ENCODE measurements at regions of chr17 and their contacts with region 1.

Region 1: GRCh38 chr17:67993596-67994361 is 2.5 kb downstream of the C17orf58 start:
- DNase-seq: peak; percentile 97
- H3K4me3 ChIP-seq: peak overlapping the region; percentile 95
- H3K27ac ChIP-seq: peak overlapping the region; percentile 88
- H3K4me1 ChIP-seq: peaks cover 27% of the 10 kb centered on the region
- CTCF ChIP-seq: no peak

Region 2: GRCh38 chr17:67800495-67800928 is 193.3 kb before region 1 on chr17:
- CTCF ChIA-PET with region 1: no interaction called
- POLR2A ChIA-PET with region 1: no interaction called
- intact Hi-C with region 1: no loop called
- DNase-seq: peak; percentile 87
- H3K4me3 ChIP-seq: no peak overlapping the region
- H3K27ac ChIP-seq: no peak overlapping the region
- H3K4me1 ChIP-seq: peaks cover 23% of the 10 kb centered on the region
- CTCF ChIP-seq: peak; percentile 89

Region 3: DNA sequence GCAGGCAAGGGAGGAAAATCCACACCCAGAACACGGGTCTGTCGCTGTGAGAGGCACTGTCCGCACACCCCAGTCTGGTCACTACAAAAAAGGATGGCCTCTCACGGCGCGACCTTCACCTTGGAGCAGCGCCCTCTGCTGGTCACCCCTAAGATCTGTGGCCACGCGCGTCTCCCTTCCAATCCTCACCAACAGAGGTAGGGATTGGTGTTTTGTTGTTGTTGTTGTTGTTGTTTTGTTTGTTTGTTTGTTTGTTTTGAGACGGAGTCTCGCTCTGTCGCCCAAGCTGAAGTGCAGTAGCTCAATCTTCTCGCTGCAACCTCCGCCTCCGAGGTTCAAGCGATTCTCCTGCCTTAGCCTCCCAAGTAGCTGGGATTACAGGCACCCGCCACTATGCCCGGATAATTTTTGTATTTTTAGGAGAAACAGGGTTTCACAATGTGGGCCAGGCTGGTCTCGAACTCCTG is 17.5 kb after region 1 on chr17:
- CTCF ChIA-PET with region 1: interaction called, 3 read pairs
- POLR2A ChIA-PET with region 1: interaction called, 5 read pairs
- intact Hi-C with region 1: loop called (anchors 2 kb)
- DNase-seq: peak; percentile 77
- H3K4me3 ChIP-seq: peak overlapping the region; percentile 47
- H3K27ac ChIP-seq: no peak overlapping the region
- H3K4me1 ChIP-seq: peaks cover 3% of the 10 kb centered on the region
- CTCF ChIP-seq: peak; percentile 94

Region 4: DNA sequence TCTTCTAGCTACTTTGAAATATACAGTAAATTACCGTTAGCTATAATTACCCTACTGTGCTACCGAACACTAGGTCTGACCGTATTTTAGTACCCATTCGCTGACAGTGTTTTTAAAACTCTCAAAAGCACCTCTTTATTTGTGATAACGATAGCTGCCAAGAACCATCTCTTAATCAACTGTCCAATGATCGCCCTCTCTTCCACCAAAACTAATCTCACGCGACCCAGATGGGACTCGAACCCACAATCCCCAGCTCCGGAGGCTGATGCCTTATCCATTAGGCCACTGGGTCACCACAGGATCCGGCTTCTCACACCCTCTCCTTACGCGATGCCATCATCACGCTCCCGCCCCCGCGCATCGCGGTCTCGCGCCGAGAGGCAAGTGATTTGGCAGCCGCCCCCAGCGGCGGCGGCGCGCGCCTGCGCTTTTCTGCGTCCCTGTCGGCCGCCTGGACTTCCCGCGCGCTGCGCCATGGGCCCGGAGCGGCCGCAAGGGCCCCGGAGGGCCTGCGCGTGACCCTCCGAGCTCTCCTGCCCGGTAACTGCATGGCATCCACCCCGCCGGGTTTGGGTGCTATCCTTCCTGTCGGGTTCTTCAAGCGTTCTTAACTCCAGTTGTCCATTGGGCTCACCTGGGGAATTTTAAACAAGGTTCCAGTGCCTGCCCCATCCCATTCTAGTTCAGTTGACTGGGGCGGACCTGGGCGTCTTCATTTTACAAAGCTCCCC is 26.1 kb after region 1 on chr17:
- CTCF ChIA-PET with region 1: no interaction called
- POLR2A ChIA-PET with region 1: interaction called, 9 read pairs
- intact Hi-C with region 1: loop called (anchors 1 kb)
- DNase-seq: peak; percentile 99
- H3K4me3 ChIP-seq: peak overlapping the region; percentile 72
- H3K27ac ChIP-seq: peak overlapping the region; percentile 46
- H3K4me1 ChIP-seq: peaks cover 16% of the 10 kb centered on the region
- CTCF ChIP-seq: peak; percentile 68

Region 5: GRCh38 chr17:68061504-68062313 is 67.9 kb after region 1 on chr17:
- CTCF ChIA-PET with region 1: no interaction called
- POLR2A ChIA-PET with region 1: no interaction called
- intact Hi-C with region 1: no loop called
- DNase-seq: no peak
- H3K4me3 ChIP-seq: no peak overlapping the region
- H3K27ac ChIP-seq: no peak overlapping the region
- H3K4me1 ChIP-seq: no peaks in the 10 kb centered on the region
- CTCF ChIP-seq: no peak

Measured in OCI-LY7 (cell line).